Sciatic nerve (tissue), 2 donors: ENCODE measurements at regions of chr19 and their contacts with region 1.

Region 1: GRCh38 chr19:30320466-30320865 is 51.7 kb upstream of the ZNF536 start:
- DNase-seq: no peak
- ATAC-seq: no peak

Region 2: DNA sequence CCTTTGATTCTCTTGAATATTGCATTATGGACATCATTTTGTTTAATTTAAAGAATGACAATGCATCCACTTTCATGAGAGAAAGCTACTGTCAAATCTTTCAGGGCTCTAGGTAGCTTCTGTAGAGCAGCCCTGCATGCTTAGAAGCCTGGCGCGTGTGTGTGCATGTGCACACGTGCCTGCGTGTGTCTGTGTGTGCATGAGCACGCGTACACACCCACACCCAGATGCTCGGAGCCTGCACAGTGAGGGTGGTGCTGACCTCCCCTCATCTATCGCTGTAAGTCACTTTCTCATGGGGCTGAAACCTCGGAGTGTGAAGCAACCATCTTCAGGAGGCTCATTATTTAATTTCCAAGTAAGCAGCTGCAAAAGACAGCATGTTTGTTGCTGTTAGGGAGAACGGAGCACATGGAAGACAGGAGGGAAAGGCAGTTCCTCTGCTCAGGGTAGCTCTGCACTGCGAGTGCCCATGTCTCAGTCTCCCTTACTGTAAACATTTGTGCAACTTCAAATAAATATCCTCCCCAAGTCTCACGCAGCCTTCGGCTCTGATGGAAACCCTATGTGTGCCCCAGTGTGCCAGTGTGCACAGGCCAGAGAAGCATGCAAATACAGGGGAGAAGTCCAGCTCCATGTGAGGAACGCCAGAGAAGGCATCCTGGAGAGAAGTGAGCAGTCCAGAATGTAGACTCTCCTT is 1006.0 kb after region 1 on chr19:
- intact Hi-C with region 1: loop called (anchors 5 kb)
- DNase-seq: no peak
- ATAC-seq: peak; percentile 26